ENCODE measurements at regions of chr12 and their contacts with region 1.

Region 1: DNA sequence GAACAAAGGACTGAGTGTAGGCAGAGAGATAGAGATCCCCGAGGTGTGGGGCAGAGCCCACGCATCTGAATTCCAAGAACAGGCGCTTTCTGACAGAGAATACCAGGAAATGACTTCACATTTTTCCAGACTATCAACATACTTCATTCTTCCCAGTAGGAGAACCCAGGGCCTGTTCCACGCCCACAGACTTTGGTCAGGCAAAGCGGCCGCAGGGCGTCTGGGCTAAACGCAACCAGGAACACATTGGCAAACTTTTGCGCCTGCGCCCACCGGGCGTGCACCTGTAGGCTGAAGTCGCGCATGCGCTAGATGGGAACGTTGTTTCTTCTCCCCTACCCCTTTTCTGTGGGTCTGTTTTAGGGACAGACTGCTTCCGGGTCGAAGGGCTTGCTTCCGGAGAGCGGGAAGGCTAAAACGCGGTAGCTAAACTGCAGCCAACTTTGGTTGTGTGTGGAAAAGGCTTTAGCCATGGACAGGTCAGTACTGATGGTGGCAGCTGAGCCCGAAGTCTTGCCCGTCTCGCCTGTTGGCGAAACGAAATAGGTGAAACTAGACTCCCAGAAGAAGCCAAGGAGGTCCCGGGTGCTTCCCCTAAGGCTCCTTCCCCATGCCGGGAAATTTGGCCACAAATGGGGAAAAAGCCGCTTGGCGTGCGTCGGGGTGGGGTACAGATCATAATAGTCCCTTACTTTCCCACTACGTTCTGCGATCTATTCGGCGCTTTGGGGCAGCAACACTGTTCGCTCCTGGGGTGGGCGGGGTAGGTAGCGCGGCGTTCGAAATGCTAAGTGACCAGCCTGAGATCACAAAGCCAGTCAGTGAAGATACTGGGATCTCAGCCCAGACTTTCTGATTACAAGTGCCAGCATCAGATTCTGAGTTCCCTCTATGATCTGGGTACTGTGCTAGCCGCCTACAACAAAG is at the start of gene NUP107:
- DNase-seq: peak; percentile 98 to 99 (median 99)
- ATAC-seq: peak; percentile 99
- H3K4me3 ChIP-seq: peak within 1 kb of the TSS; percentile 43 to 98 (median 85)
- H3K27ac ChIP-seq: peak within 1 kb of the TSS; percentile 43 to 81 (median 74)
- H3K4me1 ChIP-seq: peaks cover 0 to 23% (median 10%) of the 10 kb centered on the region in 12 donors
- H3K27me3 ChIP-seq: no peaks in the 10 kb centered on the region
- CTCF ChIP-seq: peak in 1 of 12 donors; percentile 21
- POLR2A ChIP-seq: peak in 1 of 2 donors; percentile 51
- total RNA-seq, gene NUP107: 12.8 to 27.0 (median 21.2) TPM

Region 2: DNA sequence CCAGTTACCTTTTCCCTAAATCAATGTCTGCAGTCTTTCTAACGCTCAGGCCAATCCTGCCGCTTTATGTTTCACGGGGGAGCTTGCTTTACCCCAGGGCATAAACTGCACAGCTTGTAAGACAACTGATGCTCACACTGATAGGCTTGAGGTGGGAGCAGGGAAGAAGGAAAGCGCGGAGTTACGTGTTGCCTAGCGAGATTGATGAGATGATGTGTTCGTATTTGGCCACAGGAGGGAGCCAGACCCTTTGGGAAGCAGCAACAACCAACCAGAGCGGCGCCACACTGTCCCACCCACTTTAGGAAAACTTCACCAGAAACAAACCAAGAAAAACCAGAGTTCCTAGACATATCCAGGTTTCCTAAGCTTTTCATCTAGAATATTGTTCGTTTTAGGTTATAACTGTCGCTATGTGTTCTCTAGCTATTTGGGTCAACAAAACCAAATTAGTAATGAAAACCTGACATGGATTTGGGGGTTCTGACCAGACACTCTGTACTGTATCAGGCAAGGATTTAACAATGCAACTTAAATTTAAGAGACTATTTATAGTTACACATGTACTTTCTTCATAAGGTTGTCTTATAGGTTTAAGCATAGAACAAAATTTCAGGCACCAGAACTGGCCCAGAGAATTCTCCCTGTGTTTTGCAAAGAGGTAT is 463.6 kb before region 1 on chr12:
- intact Hi-C with region 1: loop called in 1 of 10 experiments (anchors 10 kb)
- DNase-seq: peak; percentile 71 to 87 (median 78)
- ATAC-seq: peak; percentile 95 to 99 (median 98)
- H3K4me3 ChIP-seq: peak overlapping the region in 1 of 12 donors; percentile 18
- H3K27ac ChIP-seq: no peak overlapping the region
- H3K4me1 ChIP-seq: peaks cover 0 to 9% (median 0%) of the 10 kb centered on the region in 12 donors
- H3K27me3 ChIP-seq: peaks cover 0 to 10% (median 0%) of the 10 kb centered on the region in 9 donors
- CTCF ChIP-seq: peak; percentile 77 to 93 (median 84)
- POLR2A ChIP-seq: no peak

Region 3: DNA sequence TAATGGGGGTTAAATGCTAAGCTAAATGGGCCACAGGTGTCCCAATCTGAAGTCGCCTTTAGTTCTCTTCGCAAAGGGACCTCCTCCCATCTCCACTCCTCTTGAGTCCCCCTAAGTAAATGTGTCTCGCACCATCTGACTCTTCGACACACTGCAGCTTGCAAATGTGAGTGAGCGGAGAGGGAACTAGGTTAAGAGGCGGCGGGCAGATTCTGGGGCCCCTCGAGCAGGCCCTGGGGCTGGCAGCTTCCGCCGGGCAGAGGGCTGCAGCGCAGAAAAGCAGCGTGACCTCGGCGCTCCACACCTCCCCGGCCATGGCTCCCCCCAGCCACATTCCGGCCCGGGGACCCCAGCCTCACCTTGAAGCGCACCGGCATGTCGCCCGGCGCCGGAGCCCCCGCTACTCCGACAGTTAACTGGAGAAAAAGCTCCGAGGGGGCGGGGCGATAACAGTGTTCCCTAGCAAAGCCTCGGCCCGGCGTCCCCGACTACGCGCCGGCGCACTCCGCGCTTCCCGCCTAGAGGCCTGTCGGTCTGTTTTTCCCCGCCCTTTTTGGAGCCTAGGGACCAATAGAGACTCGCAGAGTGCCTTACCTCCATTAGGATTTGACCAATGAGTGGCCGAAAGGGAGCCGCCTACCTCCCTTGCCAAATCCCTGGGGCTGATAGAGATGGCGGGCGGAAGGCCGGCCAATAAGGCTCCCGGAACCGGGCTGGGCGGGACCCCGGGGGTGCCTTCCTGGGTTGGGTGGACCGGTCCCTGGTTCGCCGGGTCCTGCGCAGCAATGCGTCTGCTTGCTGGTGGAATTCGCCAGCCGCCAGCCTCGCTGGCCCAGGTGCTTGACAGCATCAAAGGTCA is 354.8 kb before region 1 on chr12 and contains the start of gene MDM1:
- intact Hi-C with region 1: loop called in 1 of 10 experiments (anchors 10 kb)
- DNase-seq: peak; percentile 97 to 98 (median 98)
- ATAC-seq: peak; percentile 99 to 100 (median 100)
- H3K4me3 ChIP-seq: peak within 1 kb of the TSS; percentile 55 to 98 (median 80)
- H3K27ac ChIP-seq: peak within 1 kb of the TSS in 11 of 12 donors; percentile 24 to 82 (median 76)
- H3K4me1 ChIP-seq: peaks cover 0 to 26% (median 14%) of the 10 kb centered on the region in 12 donors
- H3K27me3 ChIP-seq: no peaks in the 10 kb centered on the region
- CTCF ChIP-seq: no peak
- POLR2A ChIP-seq: peak in 1 of 2 donors; percentile 56
- total RNA-seq, gene MDM1: 4.0 to 8.4 (median 5.8) TPM

Region 4: GRCh38 chr12:68358532-68359485 is 328.0 kb before region 1 on chr12:
- intact Hi-C with region 1: loop called in 9 of 10 experiments (anchors 1 to 10 kb)
- DNase-seq: peak in 3 of 5 donors; percentile 46 to 64 (median 58)
- ATAC-seq: peak; percentile 57 to 94 (median 80)
- H3K4me3 ChIP-seq: no peak overlapping the region
- H3K27ac ChIP-seq: peak overlapping the region in 4 of 12 donors; percentile 20 to 50 (median 44)
- H3K4me1 ChIP-seq: peaks cover 0 to 20% (median 6%) of the 10 kb centered on the region in 12 donors
- H3K27me3 ChIP-seq: no peaks in the 10 kb centered on the region
- CTCF ChIP-seq: peak; percentile 54 to 82 (median 70)
- POLR2A ChIP-seq: no peak

Region 5: GRCh38 chr12:68406134-68406594 is 280.7 kb before region 1 on chr12:
- intact Hi-C with region 1: loop called in 1 of 10 experiments (anchors 1 kb)
- DNase-seq: peak; percentile 93 to 96 (median 95)
- ATAC-seq: peak; percentile 94 to 99 (median 99)
- H3K4me3 ChIP-seq: peak overlapping the region in 1 of 12 donors; percentile 26
- H3K27ac ChIP-seq: peak overlapping the region; percentile 45 to 87 (median 74)
- H3K4me1 ChIP-seq: peaks cover 5 to 32% (median 24%) of the 10 kb centered on the region in 12 donors
- H3K27me3 ChIP-seq: no peaks in the 10 kb centered on the region
- CTCF ChIP-seq: peak in 10 of 12 donors; percentile 27 to 65 (median 46)
- POLR2A ChIP-seq: peak in 1 of 2 donors; percentile 0

Region 6: GRCh38 chr12:68495336-68496070 is 191.4 kb before region 1 on chr12:
- intact Hi-C with region 1: no loop called
- DNase-seq: no peak
- ATAC-seq: peak in 3 of 4 donors; percentile 83 to 89 (median 88)
- H3K4me3 ChIP-seq: no peak overlapping the region
- H3K27ac ChIP-seq: peak overlapping the region in 10 of 12 donors; percentile 1 to 51 (median 32)
- H3K4me1 ChIP-seq: peaks cover 0 to 16% (median 7%) of the 10 kb centered on the region in 12 donors
- H3K27me3 ChIP-seq: no peaks in the 10 kb centered on the region
- CTCF ChIP-seq: no peak
- POLR2A ChIP-seq: no peak

Region 7: DNA sequence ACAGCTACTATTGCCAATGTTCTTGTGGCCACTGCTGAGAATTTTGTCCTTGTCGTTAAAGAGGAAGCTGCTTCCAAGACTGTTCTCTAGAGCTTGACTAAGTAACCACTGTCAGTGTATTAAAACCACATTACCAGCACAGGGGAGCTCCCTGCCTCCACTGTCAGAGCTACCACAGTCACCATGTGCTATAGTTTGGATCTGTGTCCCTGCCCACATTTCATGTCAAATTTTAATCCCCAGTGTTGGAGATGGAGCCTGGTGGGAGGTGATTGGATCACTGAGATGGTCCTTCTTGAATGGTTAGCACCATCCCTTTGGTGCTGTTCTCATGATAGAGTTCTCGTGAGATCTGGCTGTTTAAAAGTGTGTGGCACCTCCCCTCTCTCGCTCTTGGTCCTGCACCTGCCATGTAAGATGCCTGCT is 99.4 kb before region 1 on chr12:
- intact Hi-C with region 1: no loop called
- DNase-seq: no peak
- ATAC-seq: no peak
- H3K4me3 ChIP-seq: no peak overlapping the region
- H3K27ac ChIP-seq: no peak overlapping the region
- H3K4me1 ChIP-seq: peaks cover 0 to 5% (median 0%) of the 10 kb centered on the region in 12 donors
- H3K27me3 ChIP-seq: no peaks in the 10 kb centered on the region
- CTCF ChIP-seq: no peak
- POLR2A ChIP-seq: no peak

Region 8: GRCh38 chr12:68971351-68971772 is 284.5 kb after region 1 on chr12:
- intact Hi-C with region 1: no loop called
- DNase-seq: no peak
- ATAC-seq: no peak
- H3K4me3 ChIP-seq: no peak overlapping the region
- H3K27ac ChIP-seq: no peak overlapping the region
- H3K4me1 ChIP-seq: no peaks in the 10 kb centered on the region
- H3K27me3 ChIP-seq: no peaks in the 10 kb centered on the region
- CTCF ChIP-seq: no peak
- POLR2A ChIP-seq: no peak

Region 9: GRCh38 chr12:69359531-69360347 is 672.9 kb after region 1 on chr12 and contains the start of gene YEATS4:
- intact Hi-C with region 1: loop called in 1 of 10 experiments (anchors 5 kb)
- DNase-seq: peak; percentile 82 to 92 (median 86)
- ATAC-seq: peak; percentile 96 to 98 (median 98)
- H3K4me3 ChIP-seq: peak within 1 kb of the TSS; percentile 52 to 93 (median 80)
- H3K27ac ChIP-seq: peak within 1 kb of the TSS; percentile 83 to 99 (median 92)
- H3K4me1 ChIP-seq: peaks cover 0 to 25% (median 9%) of the 10 kb centered on the region in 12 donors
- H3K27me3 ChIP-seq: no peaks in the 10 kb centered on the region
- CTCF ChIP-seq: no peak
- POLR2A ChIP-seq: no peak
- total RNA-seq, gene YEATS4: 6.7 to 45.0 (median 9.9) TPM

Measured in heart left ventricle (tissue), 16 donors.